ENCODE measurements at regions of chr21 and their contacts with region 1.

Region 1: DNA sequence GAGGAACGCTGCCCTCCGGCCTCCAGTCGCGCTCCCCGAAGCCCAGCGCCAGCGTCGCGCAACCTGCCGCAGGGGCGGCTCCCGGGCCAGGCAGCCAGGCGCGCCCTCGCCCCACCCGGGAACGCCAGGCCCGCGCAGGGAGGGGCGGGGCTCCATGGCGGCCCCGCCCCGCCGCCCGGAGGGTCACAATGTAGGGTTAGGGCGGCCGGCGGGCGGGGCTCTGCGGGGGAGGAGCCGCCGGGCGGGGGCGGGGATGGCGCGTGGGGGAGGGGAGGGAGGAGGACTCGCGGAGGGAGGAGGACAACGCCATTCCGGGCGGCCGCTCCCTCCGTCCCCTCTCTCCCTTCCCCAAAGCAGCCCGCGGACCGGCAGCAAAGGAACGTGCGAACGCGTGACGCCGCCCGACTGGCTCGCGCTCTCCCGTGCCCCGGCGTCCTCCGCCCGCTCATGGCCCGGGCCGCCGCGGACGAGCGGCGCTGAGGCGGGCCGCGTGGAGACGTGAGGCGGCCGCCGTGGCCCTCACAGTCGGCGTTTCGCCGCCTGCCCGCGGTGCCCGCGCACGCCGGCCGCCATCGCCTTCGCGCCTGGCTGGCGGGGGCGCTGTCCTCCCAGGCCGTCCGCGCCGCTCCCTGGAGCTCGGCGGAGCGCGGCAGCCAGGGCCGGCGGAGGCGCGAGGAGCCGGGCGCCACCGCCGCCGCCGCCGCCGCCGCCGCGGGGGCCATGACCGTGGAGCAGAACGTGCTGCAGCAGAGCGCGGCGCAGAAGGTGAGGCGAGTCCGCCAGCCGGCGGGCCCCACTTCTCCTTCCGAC is at the start of gene USP25:
- DNase-seq: peak; percentile 74
- H3K4me3 Mint-ChIP-seq: peak within 1 kb of the TSS; percentile 92
- H3K27ac Mint-ChIP-seq: peak within 1 kb of the TSS; percentile 84
- H3K4me1 Mint-ChIP-seq: peaks cover 18% of the 10 kb centered on the region
- H3K27me3 Mint-ChIP-seq: peaks cover 21% of the 10 kb centered on the region
- total RNA-seq, gene USP25: 21.7 and 25.8 TPM in 2 replicates

Region 2: GRCh38 chr21:14523234-14523633 is 1206.6 kb before region 1 on chr21:
- intact Hi-C with region 1: loop called (anchors 10 kb)
- DNase-seq: no peak
- H3K4me3 Mint-ChIP-seq: peak overlapping the region; percentile 71
- H3K27ac Mint-ChIP-seq: peak overlapping the region; percentile 91
- H3K4me1 Mint-ChIP-seq: peaks cover 52% of the 10 kb centered on the region
- H3K27me3 Mint-ChIP-seq: no peaks in the 10 kb centered on the region

Region 3: DNA sequence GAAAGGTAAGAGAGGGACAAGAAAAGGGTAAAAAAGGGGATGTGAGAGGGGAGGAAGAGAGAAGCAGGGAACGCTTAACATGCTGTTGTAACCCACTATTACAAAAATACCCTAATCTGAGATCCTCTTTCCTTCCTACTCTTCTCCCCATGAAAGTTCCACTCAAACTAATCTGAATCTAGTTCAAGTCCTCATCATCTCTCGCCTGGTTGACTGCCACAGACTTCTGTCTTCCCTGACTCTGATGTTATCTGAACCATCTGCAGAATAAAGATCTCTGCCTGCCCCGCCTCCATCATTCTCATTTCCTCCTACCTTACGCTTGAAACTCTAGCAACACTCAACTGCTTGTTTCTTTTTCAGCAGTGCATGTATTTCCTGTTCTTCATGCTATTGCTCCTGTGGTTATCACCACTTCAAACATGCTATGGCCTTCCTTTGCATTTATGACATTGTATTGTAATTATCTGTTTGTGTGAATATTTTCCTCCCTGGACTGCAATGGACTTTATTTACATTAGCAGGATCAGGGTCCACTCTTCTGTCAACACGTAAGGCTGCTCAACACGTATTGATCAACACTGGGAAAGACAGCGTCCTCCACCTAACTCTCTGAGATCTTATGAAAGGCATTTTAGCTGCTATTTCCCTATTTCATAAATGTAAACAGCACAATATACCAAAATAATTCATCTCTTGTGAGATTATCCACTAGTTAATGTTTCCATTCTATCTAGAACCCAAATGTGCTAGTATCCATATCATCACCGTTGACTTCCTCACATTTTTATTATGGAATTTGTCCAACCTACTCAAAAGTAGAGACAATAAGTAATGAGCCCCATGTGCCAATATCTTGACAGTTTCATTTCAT is 215.6 kb before region 1 on chr21:
- intact Hi-C with region 1: loop called (anchors 5 kb)
- DNase-seq: peak; percentile 62
- H3K4me3 Mint-ChIP-seq: peak overlapping the region; percentile 15
- H3K27ac Mint-ChIP-seq: peak overlapping the region; percentile 46
- H3K4me1 Mint-ChIP-seq: peaks cover 17% of the 10 kb centered on the region
- H3K27me3 Mint-ChIP-seq: no peaks in the 10 kb centered on the region

Region 4: GRCh38 chr21:15826147-15826780 is 96.4 kb after region 1 on chr21:
- intact Hi-C with region 1: loop called (anchors 5 kb)
- DNase-seq: peak; percentile 10
- H3K4me3 Mint-ChIP-seq: no peak overlapping the region
- H3K27ac Mint-ChIP-seq: no peak overlapping the region
- H3K4me1 Mint-ChIP-seq: peaks cover 24% of the 10 kb centered on the region
- H3K27me3 Mint-ChIP-seq: no peaks in the 10 kb centered on the region

Measured in activated T-helper 2 cell treated with anti-CD3 and anti-CD28 coated beads, Interferon-gamma antibody, Interleukin-2, Interleukin-4, amounts not matched to agents 10 μg/mL and 5 μg/mL and 100 μg/mL, durations not matched to agents 14 hours and 24 hours and 36 hours (primary cell).